ENCODE measurements at regions of chr2 and their contacts with region 1.

Region 1: GRCh38 chr2:174748948-174749347 is 15.3 kb downstream of the CHRNA1 start:
- H3K4me3 ChIP-seq: no peak overlapping the region
- H3K27ac ChIP-seq: no peak overlapping the region
- H3K4me1 ChIP-seq: no peaks in the 10 kb centered on the region
- CTCF ChIP-seq: peak; percentile 68

Region 2: DNA sequence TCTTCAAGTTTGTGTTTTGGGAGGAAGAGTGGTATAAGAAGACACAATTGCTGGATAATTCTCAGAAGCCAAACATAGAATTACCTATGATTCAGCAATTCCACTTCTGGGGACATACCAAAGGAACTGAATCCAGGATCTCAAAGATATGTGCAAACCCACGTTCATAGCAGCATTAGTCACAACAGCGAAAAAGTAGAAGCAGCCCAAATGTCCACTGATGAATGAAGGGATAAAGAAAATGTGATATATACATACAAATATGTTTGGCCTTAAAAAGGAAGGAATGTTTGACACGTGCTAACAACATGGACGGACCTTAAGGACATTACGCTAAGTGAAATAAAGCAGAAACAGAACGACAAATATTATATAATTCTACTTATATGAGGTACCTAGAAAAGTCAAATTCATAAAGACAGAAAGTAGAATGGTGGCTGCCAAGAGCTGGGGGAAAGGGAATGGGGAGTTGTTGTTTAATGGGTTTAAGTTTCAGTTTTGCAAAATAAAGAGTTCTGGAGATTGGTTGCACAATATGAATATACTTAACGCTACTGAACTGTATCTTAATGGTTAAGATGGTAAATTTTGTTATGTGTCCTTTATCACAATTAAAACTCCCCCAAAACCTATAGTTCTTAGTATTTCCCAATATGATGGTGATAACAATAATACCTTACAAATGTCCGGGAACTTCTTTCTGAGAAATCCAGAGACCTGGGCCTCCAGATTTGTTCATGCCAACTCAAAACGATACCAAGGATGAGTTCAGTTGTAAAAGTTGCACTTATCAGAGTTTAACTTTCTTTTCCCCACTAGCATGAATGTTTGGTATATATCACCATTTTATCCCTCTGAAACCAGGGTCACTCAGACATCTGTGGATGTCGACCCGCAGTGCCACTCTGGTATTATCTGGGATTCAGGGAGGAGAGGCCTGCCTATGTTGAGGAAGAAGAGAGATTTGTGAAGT is 117.7 kb before region 1 on chr2:
- CTCF ChIA-PET with region 1: no interaction called
- POLR2A ChIA-PET with region 1: no interaction called
- H3K4me3 ChIP-seq: no peak overlapping the region
- H3K27ac ChIP-seq: no peak overlapping the region
- H3K4me1 ChIP-seq: no peaks in the 10 kb centered on the region
- CTCF ChIP-seq: no peak

Region 3: DNA sequence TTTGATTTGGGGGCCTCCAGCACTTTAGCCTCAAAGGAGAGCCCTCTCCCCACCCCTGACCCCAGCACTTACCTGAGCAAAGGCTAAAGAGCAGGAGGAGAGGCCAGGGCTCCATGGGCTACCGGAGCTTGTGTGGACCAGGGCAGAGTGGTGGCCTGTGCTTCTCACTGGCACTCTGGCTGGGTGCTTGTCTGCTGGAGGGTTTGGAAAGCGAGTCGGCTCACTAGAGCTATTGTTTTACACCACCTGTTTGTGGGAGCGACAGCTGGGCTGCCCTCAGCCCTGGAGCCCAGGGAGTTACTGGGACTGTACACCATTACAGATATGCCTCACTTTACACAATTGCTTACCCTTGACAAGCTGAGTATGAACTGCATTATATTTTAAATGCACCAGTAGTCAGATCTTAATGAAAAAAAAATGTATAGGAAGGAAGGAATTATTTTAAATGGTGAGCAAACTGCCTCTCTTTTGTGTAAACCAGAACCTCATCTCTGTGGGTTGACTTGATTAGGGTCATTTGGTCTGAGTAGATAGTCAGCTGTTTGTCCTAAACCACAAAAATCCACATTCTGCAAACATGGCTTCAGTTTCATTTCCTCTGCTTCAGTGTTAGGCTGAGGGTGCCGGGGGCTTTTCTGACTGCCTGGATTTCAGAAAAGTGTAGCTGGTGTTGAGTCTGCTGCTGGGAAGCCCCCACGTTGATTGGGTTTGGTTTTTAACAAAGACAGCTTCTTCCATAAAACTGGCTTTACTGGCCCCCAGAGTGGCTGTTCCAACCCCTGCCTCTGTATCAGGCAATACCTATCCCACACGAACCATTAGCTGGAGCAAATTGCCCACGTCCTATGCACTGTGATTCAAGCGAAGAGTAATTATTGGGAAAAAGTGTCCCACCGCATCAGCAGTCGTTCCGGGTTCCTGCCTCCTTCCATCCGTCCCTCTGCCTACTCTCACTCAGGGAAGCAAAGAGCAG is 15.6 kb after region 1 on chr2 and contains the start of gene CHRNA1:
- CTCF ChIA-PET with region 1: interaction called, 53 read pairs
- POLR2A ChIA-PET with region 1: interaction called, 4 read pairs
- H3K4me3 ChIP-seq: no peak within 1 kb of the TSS
- H3K27ac ChIP-seq: no peak within 1 kb of the TSS
- H3K4me1 ChIP-seq: peaks cover 4% of the 10 kb centered on the region; the same call in 1 of the 2 replicates
- CTCF ChIP-seq: no peak

Region 4: GRCh38 chr2:174771631-174772471 is 22.9 kb after region 1 on chr2:
- CTCF ChIA-PET with region 1: interaction called, 53 read pairs
- POLR2A ChIA-PET with region 1: no interaction called
- H3K4me3 ChIP-seq: no peak overlapping the region
- H3K27ac ChIP-seq: no peak overlapping the region
- H3K4me1 ChIP-seq: no peaks in the 10 kb centered on the region
- CTCF ChIP-seq: peak; percentile 84

Region 5: GRCh38 chr2:174901075-174901474 is 152.1 kb after region 1 on chr2:
- CTCF ChIA-PET with region 1: no interaction called
- POLR2A ChIA-PET with region 1: no interaction called
- H3K4me3 ChIP-seq: no peak overlapping the region
- H3K27ac ChIP-seq: no peak overlapping the region
- H3K4me1 ChIP-seq: peaks cover 9% of the 10 kb centered on the region
- CTCF ChIP-seq: no peak

Region 6: DNA sequence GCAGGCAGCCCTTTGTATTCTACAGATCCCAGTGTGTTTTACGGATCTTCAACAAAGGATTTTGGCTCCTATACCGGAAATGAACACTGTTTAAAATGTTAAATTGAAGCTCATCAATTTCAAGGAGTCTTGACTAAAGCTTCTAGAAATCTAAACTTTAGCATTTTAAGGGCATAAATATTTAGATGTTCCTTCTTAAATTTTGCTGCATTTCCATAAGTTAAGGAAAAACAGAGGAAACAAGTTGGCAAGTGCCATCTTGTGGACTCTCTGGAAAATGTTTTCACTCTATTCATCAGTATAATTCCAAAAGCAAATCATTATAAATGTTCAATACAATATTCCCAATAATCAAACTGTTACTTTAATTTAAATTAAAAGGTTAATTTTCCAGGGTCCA is 236.7 kb after region 1 on chr2:
- CTCF ChIA-PET with region 1: interaction called, 32 read pairs
- POLR2A ChIA-PET with region 1: no interaction called
- H3K4me3 ChIP-seq: no peak overlapping the region
- H3K27ac ChIP-seq: no peak overlapping the region
- H3K4me1 ChIP-seq: 0 out of 2 replicates have a peak, but pooled peaks cover 4% of the 10 kb centered on the region
- CTCF ChIP-seq: no peak

Region 7: GRCh38 chr2:175030380-175031271 is 281.7 kb after region 1 on chr2:
- CTCF ChIA-PET with region 1: interaction called, 10 read pairs
- POLR2A ChIA-PET with region 1: no interaction called
- H3K4me3 ChIP-seq: no peak overlapping the region
- H3K27ac ChIP-seq: no peak overlapping the region
- H3K4me1 ChIP-seq: no peaks in the 10 kb centered on the region
- CTCF ChIP-seq: peak; percentile 59

Region 8: DNA sequence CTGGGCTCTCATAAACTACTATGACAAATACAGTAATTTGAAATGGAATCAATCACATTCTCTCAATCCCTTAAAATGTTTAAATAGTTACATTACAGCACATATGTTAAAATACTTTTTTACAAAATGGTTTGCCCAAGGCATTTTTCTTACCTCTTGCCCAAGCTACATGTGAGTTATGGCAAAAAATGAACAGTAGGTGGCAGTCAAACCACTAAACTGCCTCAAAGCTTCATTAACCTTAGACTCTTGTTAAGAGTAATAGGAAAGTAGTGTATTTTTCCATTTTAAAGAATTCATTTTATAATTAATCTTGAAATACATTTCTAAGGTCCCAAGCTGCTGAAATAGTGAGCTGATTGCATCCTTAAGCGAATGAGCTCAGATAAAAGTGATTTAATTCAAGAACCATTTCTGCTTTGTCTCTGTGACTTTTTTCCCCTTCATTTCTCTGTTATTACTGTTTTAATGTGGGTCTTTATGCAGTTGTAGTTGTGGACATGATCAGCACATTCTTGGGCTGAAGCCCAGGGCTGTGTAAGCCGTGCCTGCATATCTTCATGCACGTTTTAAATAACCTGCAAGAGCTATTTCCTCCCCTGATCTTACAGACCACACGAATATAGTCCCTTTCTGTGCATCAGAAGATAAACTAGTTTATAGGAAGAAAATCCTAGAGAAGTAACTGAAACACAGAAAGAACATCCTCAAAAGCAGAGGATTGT is 941.3 kb after region 1 on chr2:
- CTCF ChIA-PET with region 1: no interaction called
- POLR2A ChIA-PET with region 1: no interaction called
- H3K4me3 ChIP-seq: no peak overlapping the region
- H3K27ac ChIP-seq: no peak overlapping the region
- H3K4me1 ChIP-seq: no peaks in the 10 kb centered on the region
- CTCF ChIP-seq: peak; percentile 25; the same call in 1 of the 2 replicates